ENCODE measurements at regions of chr12 and their contacts with region 1.

Region 1: DNA sequence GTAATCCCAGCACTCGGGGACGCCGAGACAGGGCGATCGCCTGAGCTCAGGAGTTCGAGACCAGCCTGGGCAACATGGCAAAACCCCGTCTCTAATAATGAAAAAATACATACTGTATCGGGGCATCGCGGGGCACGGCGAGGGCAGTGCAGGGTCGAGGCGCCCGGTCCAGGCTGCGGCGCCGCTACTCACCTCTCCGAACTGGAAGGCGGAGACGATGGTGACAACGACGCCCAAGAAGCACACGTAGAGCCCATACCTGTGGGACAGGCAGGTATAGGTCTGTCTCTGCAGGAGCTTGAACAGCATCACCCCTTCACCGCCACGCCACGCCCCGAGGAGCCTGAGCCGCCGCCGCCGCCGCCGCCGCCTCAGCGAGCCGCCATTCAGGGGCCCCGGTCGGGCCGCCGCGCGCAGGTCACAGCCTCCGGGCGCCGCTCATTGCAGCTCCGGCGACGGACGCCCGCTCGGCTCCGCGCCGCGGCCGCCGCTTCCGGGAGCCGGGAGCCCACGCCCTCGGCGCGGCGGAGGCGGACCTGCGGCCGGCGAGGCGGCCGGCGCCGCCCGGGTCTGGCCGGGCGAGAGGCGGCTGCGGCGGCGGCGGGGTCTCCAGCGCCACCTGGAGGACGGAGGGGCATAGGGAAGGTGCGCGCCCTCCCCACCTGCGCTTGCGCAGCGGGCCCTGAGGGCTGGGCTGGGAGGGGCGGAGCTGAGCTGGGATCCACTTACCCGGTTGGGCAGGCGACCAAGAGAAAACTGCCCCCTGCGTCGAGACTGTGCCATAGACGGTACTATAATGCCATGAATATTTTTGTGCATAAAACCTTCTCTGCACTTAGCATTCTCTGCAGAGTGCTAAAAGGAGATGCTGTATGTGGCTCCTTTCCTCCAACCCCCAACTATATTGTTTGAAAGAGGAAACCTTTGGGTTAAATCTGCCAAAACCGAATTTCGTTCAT is at the start of gene GNPTAB:
- DNase-seq: peak; percentile 98
- H3K4me3 ChIP-seq: peak within 1 kb of the TSS; percentile 86 to 98
- H3K27ac ChIP-seq: peak within 1 kb of the TSS in 1 of 2 experiments; percentile 51; a peak in 2 of 4 replicates
- H3K4me1 ChIP-seq: peaks cover 3 to 8% of the 10 kb centered on the region in 2 experiments; a peak in 2 of 4 replicates
- H3K27me3 ChIP-seq: no peaks in the 10 kb centered on the region
- CTCF ChIP-seq: peak; percentile 64
- EP300 ChIP-seq: no peak; a peak in 1 of 4 replicates
- RAD21 ChIP-seq: peak; percentile 54; the same call in 1 of the 2 replicates
- polyA plus RNA-seq, gene GNPTAB: 18.8 and 25.1 TPM in 2 replicates

Region 2: GRCh38 chr12:101678081-101678480 is 152.6 kb before region 1 on chr12:
- CTCF ChIA-PET with region 1: no interaction called
- POLR2A ChIA-PET with region 1: no interaction called
- DNase-seq: no peak
- H3K4me3 ChIP-seq: no peak overlapping the region
- H3K27ac ChIP-seq: no peak overlapping the region
- H3K4me1 ChIP-seq: no peaks in the 10 kb centered on the region
- H3K27me3 ChIP-seq: no peaks in the 10 kb centered on the region
- CTCF ChIP-seq: no peak
- EP300 ChIP-seq: no peak
- RAD21 ChIP-seq: no peak

Region 3: DNA sequence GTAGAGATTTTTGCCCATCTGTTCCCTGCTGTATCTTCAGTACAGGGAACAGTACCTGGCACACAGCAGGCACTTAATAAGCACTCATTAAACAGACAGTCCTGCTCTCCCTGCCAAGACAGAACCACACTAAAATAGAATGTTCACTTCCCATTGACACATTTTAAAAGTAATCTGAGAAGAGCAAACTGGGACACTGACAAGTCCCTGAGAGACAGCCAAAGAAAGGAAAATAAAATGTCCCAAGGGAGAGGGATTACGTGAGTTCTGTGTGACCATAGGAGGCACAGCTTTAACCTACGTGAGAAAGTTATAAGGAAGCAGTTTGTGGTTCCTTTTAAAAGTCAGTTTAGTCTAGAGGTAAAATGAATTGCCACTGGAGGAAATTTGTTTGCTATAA is 47.5 kb before region 1 on chr12:
- CTCF ChIA-PET with region 1: interaction called, 16 read pairs
- POLR2A ChIA-PET with region 1: no interaction called
- DNase-seq: no peak
- H3K4me3 ChIP-seq: no peak overlapping the region
- H3K27ac ChIP-seq: peak overlapping the region in 1 of 2 experiments; percentile 47; a peak in 2 of 4 replicates
- H3K4me1 ChIP-seq: no peaks in the 10 kb centered on the region
- H3K27me3 ChIP-seq: no peaks in the 10 kb centered on the region
- CTCF ChIP-seq: no peak
- EP300 ChIP-seq: no peak
- RAD21 ChIP-seq: no peak

Region 4: DNA sequence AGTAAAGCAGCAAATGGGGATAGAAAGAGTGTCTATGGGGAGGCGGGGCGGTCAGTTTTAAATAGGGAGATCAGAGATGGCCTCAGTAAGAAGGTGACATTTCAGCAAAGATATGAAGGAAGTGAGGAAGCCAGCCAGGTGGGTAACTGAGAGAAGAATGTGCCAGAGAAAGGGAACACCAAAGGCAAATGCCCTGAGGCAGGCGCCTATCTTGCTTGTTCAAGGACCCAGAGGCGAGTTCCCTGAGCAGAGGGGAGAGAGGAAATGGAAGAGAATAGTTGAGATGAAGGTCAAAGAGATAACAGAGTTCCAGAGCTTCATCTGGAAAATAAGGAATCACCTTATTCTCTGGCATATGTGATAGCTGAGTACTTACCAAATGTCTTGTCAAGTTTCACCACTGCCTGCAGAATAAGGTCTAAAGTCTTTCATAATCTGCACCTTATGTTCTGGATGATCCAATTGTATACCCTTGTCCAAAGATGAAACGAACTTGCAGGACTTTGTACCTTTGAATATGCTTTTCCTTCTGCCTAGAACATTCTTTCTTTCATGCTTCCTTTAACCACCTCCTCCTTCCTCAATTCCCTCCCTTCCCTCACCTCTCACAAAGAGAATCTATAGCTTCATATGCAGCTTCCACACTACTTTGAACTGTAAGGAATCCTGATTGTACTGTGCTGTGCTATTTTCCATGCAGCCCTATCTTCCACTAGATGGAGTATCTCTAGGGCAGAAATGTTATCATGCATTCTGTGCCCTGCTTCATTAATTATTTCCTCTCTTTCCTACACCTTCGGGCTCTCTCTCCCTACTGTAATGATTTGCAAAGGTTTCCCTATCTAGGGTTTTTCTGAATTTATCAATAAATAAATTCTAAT is 38.4 kb before region 1 on chr12:
- CTCF ChIA-PET with region 1: interaction called, 23 read pairs
- POLR2A ChIA-PET with region 1: no interaction called
- DNase-seq: peak; percentile 10
- H3K4me3 ChIP-seq: no peak overlapping the region
- H3K27ac ChIP-seq: peak overlapping the region in 1 of 2 experiments; percentile 64; a peak in 1 of 4 replicates
- H3K4me1 ChIP-seq: no peaks in the 10 kb centered on the region
- H3K27me3 ChIP-seq: no peaks in the 10 kb centered on the region
- CTCF ChIP-seq: peak; percentile 46
- EP300 ChIP-seq: no peak
- RAD21 ChIP-seq: 0 out of 2 replicates have a peak, but pooled peaks have one; percentile 6

Region 5: DNA sequence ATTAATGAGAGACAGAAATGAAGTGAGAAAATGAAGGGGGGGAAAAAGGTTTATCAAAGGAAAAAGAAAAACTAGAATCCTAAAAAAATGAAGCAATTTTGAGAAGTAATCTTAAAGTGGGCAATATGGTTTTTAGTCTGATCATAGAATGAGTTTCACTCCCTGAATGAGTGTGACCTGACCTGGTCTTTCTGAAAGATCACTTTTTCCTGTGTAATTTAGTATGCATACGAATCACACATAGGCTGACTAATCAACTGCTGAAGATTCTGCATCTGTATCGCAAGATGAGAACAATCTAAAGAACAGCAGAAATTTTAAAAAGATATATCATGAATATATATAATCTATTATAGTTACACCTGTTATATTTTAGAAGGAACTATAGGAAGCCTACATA is 11.2 kb before region 1 on chr12:
- CTCF ChIA-PET with region 1: interaction called, 15 read pairs
- POLR2A ChIA-PET with region 1: no interaction called
- DNase-seq: no peak
- H3K4me3 ChIP-seq: no peak overlapping the region
- H3K27ac ChIP-seq: no peak overlapping the region
- H3K4me1 ChIP-seq: peaks cover 0 to 3% of the 10 kb centered on the region in 2 experiments; a peak in 1 of 4 replicates
- H3K27me3 ChIP-seq: no peaks in the 10 kb centered on the region
- CTCF ChIP-seq: no peak
- EP300 ChIP-seq: no peak
- RAD21 ChIP-seq: no peak

Region 6: GRCh38 chr12:101850199-101850598 is 19.6 kb after region 1 on chr12:
- CTCF ChIA-PET with region 1: no interaction called
- POLR2A ChIA-PET with region 1: no interaction called
- DNase-seq: no peak
- H3K4me3 ChIP-seq: no peak overlapping the region
- H3K27ac ChIP-seq: no peak overlapping the region
- H3K4me1 ChIP-seq: peaks cover 0 to 5% of the 10 kb centered on the region in 2 experiments; a peak in 1 of 4 replicates
- H3K27me3 ChIP-seq: no peaks in the 10 kb centered on the region
- CTCF ChIP-seq: no peak
- EP300 ChIP-seq: no peak
- RAD21 ChIP-seq: no peak